Dendritic cell treated with granulocyte-macrophage colony-stimulating factor and Interleukin-4, amounts not matched to agents 40 ng/mL and 50 ng/mL, for 4 days (primary cell): ENCODE measurements at regions of chr3 and their contacts with region 1.

Region 1: DNA sequence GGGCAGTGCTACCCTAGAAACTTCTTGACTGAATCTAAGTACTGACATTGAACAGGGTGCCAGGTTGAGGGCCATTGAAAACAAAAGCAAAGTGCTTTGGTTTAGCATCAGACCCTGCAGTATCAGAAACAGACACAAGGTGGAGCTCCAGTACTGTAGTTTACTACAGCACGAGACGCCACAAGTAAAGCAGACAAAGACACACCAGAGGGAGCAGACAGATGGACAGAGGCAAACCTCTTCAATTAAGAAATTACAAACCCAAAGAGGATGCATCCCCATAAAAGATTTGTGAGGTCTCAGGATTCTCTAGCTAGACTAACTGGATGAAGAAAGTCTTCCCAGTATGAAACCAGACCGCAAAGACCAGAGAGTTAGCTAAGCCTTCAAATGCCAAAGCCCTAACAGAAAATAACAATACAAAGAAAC is 16.6 kb downstream of the TOP2B start:
- H3K4me3 Mint-ChIP-seq: no peak overlapping the region
- H3K27ac Mint-ChIP-seq: no peak overlapping the region
- H3K4me1 Mint-ChIP-seq: peaks cover 32% of the 10 kb centered on the region
- H3K27me3 Mint-ChIP-seq: no peaks in the 10 kb centered on the region

Region 2: GRCh38 chr3:25594007-25594502 is 54.1 kb before region 1 on chr3:
- intact Hi-C with region 1: no loop called
- H3K4me3 Mint-ChIP-seq: no peak overlapping the region
- H3K27ac Mint-ChIP-seq: no peak overlapping the region
- H3K4me1 Mint-ChIP-seq: peaks cover 7% of the 10 kb centered on the region
- H3K27me3 Mint-ChIP-seq: no peaks in the 10 kb centered on the region

Region 3: DNA sequence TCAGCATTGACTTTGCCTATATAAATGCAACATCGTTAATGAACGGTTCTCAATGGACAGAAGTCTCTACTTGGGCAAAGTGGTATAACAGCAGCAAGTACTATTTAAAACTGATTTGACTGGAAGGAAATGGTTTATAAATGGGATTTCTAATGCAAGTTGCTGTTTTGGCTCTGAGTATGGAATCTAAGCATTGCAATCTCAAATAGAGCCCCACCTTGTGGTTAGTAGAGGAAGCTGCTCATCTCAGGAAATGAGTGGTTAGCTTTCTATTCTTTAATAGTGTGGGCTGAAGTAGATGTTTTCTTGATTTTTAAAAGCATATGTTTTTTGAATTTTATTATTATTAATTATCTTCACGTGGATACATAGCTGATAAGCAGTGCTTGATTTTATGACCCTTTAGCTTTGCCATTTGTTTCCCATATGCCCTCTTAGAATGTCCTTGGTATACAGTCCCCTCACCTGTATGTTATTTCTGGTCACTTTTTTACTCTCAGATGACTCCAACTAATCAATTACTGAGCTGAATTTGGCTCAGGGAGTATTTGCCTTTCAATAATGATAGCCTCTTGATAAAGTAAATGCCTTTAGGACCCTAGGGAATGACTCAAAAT is 208.9 kb after region 1 on chr3:
- intact Hi-C with region 1: loop called (anchors 1 kb)
- H3K4me3 Mint-ChIP-seq: no peak overlapping the region
- H3K27ac Mint-ChIP-seq: no peak overlapping the region
- H3K4me1 Mint-ChIP-seq: no peaks in the 10 kb centered on the region
- H3K27me3 Mint-ChIP-seq: no peaks in the 10 kb centered on the region

Region 4: GRCh38 chr3:25910997-25911396 is 262.9 kb after region 1 on chr3:
- intact Hi-C with region 1: loop called (anchors 5 kb)
- H3K4me3 Mint-ChIP-seq: no peak overlapping the region
- H3K27ac Mint-ChIP-seq: no peak overlapping the region
- H3K4me1 Mint-ChIP-seq: peaks cover 5% of the 10 kb centered on the region
- H3K27me3 Mint-ChIP-seq: no peaks in the 10 kb centered on the region